ENCODE measurements at regions of chr12 and their contacts with region 1.

Region 1: DNA sequence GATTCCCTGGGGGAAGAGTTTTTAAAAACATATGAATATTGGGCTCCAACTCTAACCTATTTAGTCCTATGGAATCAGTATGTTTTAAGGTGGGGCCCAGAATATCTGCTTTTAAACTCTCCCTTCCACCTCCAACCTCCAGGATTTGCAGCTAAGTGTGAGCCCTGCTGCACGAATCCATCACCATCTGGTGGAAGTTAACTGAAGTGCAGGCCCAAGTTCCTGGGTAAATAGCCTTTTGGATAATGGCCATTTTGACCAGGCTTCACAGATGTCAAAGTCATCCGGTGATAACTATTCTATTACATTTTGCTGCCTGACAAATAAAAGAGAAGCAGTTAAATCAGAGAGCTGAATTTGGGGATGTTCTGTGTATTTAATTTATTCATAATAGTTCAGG is 58.1 kb upstream of the RMST start:
- DNase-seq: no peak
- H3K4me3 Mint-ChIP-seq: no peak overlapping the region
- H3K27ac Mint-ChIP-seq: no peak overlapping the region
- H3K4me1 Mint-ChIP-seq: no peaks in the 10 kb centered on the region
- H3K27me3 Mint-ChIP-seq: no peaks in the 10 kb centered on the region

Region 2: DNA sequence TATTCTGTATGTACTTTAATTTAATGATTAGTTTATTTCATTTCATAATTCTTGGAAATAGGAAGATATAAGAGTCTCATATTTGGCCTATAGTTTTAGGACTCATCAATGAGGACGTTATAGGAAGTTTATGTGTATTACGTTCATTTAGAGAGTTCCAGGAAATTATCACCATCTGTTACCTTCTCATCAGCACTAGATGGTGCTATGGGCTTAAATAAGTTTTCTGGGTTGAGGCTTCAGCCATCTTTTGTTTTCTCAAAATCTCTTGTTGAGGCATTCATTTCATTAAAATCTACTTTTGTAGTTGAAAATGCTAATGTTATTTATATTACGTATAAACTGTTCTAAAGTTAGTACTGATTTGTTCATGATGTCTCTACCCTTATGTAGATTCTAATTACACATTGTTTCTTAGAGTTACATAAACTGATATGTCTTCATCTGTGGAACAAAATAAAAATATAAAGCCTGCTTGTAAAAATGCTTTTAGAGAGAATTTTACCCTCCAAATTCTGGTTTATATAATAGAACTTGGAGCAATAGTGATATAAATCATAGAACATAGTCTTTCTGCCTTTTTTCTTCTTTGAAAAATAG is 825.9 kb before region 1 on chr12:
- intact Hi-C with region 1: loop called (anchors 10 kb)
- DNase-seq: no peak
- H3K4me3 Mint-ChIP-seq: no peak overlapping the region
- H3K27ac Mint-ChIP-seq: no peak overlapping the region
- H3K4me1 Mint-ChIP-seq: peaks cover 2% of the 10 kb centered on the region
- H3K27me3 Mint-ChIP-seq: peaks cover 14% of the 10 kb centered on the region

Region 3: GRCh38 chr12:97159362-97159761 is 245.2 kb before region 1 on chr12:
- intact Hi-C with region 1: loop called (anchors 10 kb)
- DNase-seq: no peak
- H3K4me3 Mint-ChIP-seq: no peak overlapping the region
- H3K27ac Mint-ChIP-seq: no peak overlapping the region
- H3K4me1 Mint-ChIP-seq: no peaks in the 10 kb centered on the region
- H3K27me3 Mint-ChIP-seq: no peaks in the 10 kb centered on the region